BJ (cell line): ENCODE measurements at regions of chr15 and their contacts with region 1.

Region 1: DNA sequence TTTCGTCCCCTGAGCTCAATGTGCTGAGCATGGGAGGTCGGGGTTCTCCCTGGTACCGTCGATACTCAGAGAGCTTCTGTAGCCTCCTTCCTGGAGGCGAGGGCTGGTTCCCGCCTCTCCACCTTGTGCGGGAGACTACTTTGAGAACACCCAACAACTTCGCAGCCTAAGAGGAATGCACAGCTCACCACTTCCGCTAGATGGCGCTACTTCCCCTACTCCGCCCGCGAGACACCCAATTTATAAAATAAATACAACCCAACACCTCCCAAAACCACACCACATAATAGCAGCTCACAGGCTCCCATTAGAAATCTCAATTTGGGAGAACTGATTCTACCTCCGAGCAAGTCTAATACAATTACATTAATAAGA is 1.2 kb downstream of the RGMA start:
- DNase-seq: no peak
- H3K4me3 ChIP-seq: no peak overlapping the region
- H3K27me3 ChIP-seq: peaks cover 33% of the 10 kb centered on the region
- CTCF ChIP-seq: peak; percentile 79

Region 2: GRCh38 chr15:93076875-93077274 is 10.9 kb before region 1 on chr15:
- CTCF ChIA-PET with region 1: interaction called, 18 read pairs
- POLR2A ChIA-PET with region 1: no interaction called
- DNase-seq: no peak
- H3K4me3 ChIP-seq: no peak overlapping the region
- H3K27me3 ChIP-seq: peaks cover 5% of the 10 kb centered on the region
- CTCF ChIP-seq: no peak

Region 3: GRCh38 chr15:93102211-93102610 is 14.4 kb after region 1 on chr15:
- CTCF ChIA-PET with region 1: interaction called, 11 read pairs
- POLR2A ChIA-PET with region 1: no interaction called
- DNase-seq: no peak
- H3K4me3 ChIP-seq: no peak overlapping the region
- H3K27me3 ChIP-seq: no peaks in the 10 kb centered on the region
- CTCF ChIP-seq: no peak

Region 4: GRCh38 chr15:93467327-93467726 is 379.5 kb after region 1 on chr15:
- CTCF ChIA-PET with region 1: no interaction called
- POLR2A ChIA-PET with region 1: no interaction called
- DNase-seq: no peak
- H3K4me3 ChIP-seq: no peak overlapping the region
- H3K27me3 ChIP-seq: no peaks in the 10 kb centered on the region
- CTCF ChIP-seq: no peak